ENCODE measurements at regions of chr1 and their contacts with region 1.

Region 1: GRCh38 chr1:64881281-64881680 is 85.1 kb downstream of the JAK1 start:
- DNase-seq: no peak
- H3K4me3 Mint-ChIP-seq: no peak overlapping the region
- H3K27ac Mint-ChIP-seq: no peak overlapping the region
- H3K4me1 Mint-ChIP-seq: peaks cover 68% of the 10 kb centered on the region
- H3K27me3 Mint-ChIP-seq: no peaks in the 10 kb centered on the region

Region 2: DNA sequence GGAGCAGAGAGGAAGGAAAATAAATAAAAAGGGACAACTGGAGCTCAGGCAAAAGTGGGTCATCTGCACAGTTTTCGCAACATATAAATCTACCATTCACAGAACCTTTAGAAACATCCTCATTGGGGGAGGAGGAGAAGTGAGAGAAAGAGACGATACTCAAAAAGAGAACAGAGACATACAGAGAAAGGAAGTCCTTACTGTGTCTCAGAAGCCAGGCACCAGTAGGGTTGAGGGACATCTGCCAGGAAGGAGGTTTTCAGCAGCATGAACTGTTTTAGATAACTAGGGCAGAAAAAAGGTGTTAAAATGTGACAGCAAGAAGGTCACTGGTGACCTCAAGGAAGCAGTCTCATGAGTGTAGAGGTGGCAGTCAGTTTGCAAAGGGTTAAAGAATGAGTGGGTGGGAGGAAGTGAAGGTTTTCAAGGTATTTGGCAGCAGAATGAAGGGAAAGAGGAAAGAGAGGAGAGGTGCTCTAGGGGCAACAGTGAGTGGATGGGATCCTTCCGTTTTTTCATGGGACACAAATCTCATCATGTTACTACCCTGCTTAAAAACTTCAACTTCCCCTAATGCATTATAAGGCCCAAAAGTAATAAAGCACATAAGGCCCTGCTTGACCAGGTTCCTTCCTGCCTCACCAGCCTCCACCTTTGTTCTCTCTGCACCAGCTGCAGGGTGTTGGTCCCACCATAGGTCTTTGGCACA is 75.6 kb after region 1 on chr1:
- CTCF ChIA-PET with region 1: interaction called, 5 read pairs
- POLR2A ChIA-PET with region 1: interaction called, 4 read pairs
- intact Hi-C with region 1: loop called (anchors 2 kb)
- DNase-seq: peak; percentile 76
- H3K4me3 Mint-ChIP-seq: no peak overlapping the region
- H3K27ac Mint-ChIP-seq: no peak overlapping the region
- H3K4me1 Mint-ChIP-seq: peaks cover 59% of the 10 kb centered on the region
- H3K27me3 Mint-ChIP-seq: no peaks in the 10 kb centered on the region

Measured in activated CD4-positive, alpha-beta memory T cell treated with anti-CD3 and anti-CD28 coated beads for 36 hours (primary cell).